Cardiac septum (tissue), 1 donor: ENCODE measurements at regions of chr22 and their contacts with region 1.

Region 1: DNA sequence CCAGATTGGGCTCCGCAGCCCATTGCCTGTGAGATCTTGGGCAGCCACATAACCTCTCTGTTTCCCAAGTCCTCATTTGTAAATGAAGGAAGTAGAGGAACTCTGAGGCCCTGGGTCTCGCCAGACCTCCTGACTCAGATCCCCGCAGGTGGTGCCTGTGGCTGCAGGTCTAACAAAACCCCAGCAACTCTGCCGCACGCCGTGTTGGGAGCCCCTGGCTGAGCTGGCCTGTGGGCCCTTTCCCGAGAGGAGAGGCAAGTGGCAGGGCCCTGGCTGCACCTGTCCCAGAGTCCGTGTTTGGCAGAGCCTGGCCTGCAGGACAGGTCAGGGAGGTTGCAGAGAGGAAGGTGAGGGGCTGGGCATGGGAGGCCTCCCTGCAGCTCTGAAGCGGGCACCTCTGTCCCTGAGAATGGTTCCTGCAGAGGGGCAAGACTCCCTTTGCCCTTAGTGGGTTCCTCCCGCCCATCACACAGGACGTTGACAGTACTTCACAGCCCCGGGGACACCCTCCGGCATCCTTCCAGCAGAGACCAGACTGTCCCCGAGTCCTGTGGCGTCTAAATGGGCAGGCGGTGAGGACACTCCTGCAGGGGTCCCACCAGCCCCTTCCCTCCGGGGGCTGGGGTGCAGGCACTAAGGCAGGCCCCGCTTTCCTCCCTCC is 67.7 kb downstream of the ARHGAP8 start:
- DNase-seq: no peak

Region 2: GRCh38 chr22:45091254-45091854 is 271.3 kb after region 1 on chr22:
- intact Hi-C with region 1: loop called (anchors 5 kb)
- DNase-seq: no peak